Panc1 (cell line): ENCODE measurements at regions of chr13 and their contacts with region 1.

Region 1: GRCh38 chr13:68927387-68928026 is 1180.1 kb upstream of the ATXN8OS start:
- DNase-seq: peak; percentile 38
- ATAC-seq: peak; percentile 78; the same call in 1 of the 2 replicates
- H3K4me3 ChIP-seq: no peak overlapping the region
- H3K27ac ChIP-seq: no peak overlapping the region
- H3K4me1 ChIP-seq: no peaks in the 10 kb centered on the region
- H3K27me3 ChIP-seq: no peaks in the 10 kb centered on the region
- CTCF ChIP-seq: peak; percentile 73

Region 2: GRCh38 chr13:68019901-68020300 is 907.6 kb before region 1 on chr13:
- CTCF ChIA-PET with region 1: no interaction called
- POLR2A ChIA-PET with region 1: no interaction called
- in situ Hi-C with region 1: no loop called
- intact Hi-C with region 1: no loop called
- DNase-seq: no peak
- ATAC-seq: no peak
- H3K4me3 ChIP-seq: no peak overlapping the region
- H3K27ac ChIP-seq: no peak overlapping the region
- H3K4me1 ChIP-seq: no peaks in the 10 kb centered on the region
- H3K27me3 ChIP-seq: no peaks in the 10 kb centered on the region
- CTCF ChIP-seq: no peak

Region 3: GRCh38 chr13:68810660-68811059 is 116.8 kb before region 1 on chr13:
- CTCF ChIA-PET with region 1: no interaction called
- POLR2A ChIA-PET with region 1: no interaction called
- in situ Hi-C with region 1: no loop called
- intact Hi-C with region 1: loop called (anchors 10 kb)
- DNase-seq: no peak
- ATAC-seq: no peak
- H3K4me3 ChIP-seq: no peak overlapping the region
- H3K27ac ChIP-seq: no peak overlapping the region
- H3K4me1 ChIP-seq: no peaks in the 10 kb centered on the region
- H3K27me3 ChIP-seq: no peaks in the 10 kb centered on the region
- CTCF ChIP-seq: peak; percentile 38; the same call in 1 of the 2 replicates